ENCODE measurements at regions of chr1 and their contacts with region 1.

Region 1: DNA sequence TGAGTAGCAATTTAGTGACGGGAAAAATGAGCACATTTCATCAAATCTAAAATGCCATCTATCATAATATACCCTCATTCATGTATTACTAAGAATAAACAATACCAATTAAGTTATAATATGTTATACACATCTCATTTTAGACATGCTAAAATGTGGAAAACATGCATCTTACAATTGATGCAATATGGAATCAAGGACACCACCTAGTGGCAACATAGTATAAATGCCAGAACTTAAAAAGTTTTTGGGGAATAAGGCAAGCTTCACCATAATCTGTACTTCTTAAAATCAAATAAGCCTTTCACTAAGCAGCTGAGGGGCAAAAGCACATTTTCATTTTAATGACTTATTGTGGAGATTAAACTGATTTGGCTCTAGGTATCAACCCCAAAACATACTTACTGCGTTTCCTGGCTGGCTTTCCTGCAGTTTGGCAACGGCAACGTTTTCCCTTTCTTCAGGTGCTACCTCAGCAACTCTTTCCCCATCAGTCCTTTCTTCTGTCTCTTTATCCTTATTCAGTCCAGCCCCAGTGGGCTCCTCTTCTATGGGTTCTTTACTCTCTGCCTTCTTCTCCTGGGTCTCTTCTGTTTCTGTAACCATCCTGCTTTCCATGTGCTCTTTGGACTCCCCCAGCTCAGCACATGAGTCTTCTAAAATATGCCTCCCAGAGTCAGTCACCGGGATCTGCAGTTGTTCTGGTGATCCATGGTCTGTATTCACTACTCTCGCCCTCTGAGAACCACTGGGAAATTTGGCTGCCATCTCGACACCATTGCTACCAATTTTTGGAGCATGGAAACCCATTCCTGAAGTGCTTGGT is 11.4 kb downstream of the SDE2 start:
- DNase-seq: peak; percentile 45
- H3K4me3 ChIP-seq: no peak overlapping the region
- H3K27ac ChIP-seq: no peak overlapping the region
- H3K4me1 ChIP-seq: no peaks in the 10 kb centered on the region
- H3K27me3 ChIP-seq: no peaks in the 10 kb centered on the region
- CTCF ChIP-seq: peak; percentile 87
- EP300 ChIP-seq: no peak
- RAD21 ChIP-seq: peak; percentile 67

Region 2: GRCh38 chr1:225467193-225468020 is 520.3 kb before region 1 on chr1:
- CTCF ChIA-PET with region 1: interaction called, 11 read pairs
- POLR2A ChIA-PET with region 1: no interaction called
- DNase-seq: no peak
- H3K4me3 ChIP-seq: no peak overlapping the region
- H3K27ac ChIP-seq: no peak overlapping the region
- H3K4me1 ChIP-seq: peaks cover 0 to 12% of the 10 kb centered on the region in 2 experiments; a peak in 3 of 4 replicates
- H3K27me3 ChIP-seq: no peaks in the 10 kb centered on the region
- CTCF ChIP-seq: no peak
- EP300 ChIP-seq: no peak
- RAD21 ChIP-seq: no peak

Region 3: GRCh38 chr1:225480825-225481434 is 506.8 kb before region 1 on chr1:
- CTCF ChIA-PET with region 1: interaction called, 82 read pairs
- POLR2A ChIA-PET with region 1: no interaction called
- DNase-seq: peak; percentile 68
- H3K4me3 ChIP-seq: no peak overlapping the region
- H3K27ac ChIP-seq: no peak overlapping the region
- H3K4me1 ChIP-seq: peaks cover 0 to 6% of the 10 kb centered on the region in 2 experiments; a peak in 2 of 4 replicates
- H3K27me3 ChIP-seq: no peaks in the 10 kb centered on the region
- CTCF ChIP-seq: peak; percentile 75
- EP300 ChIP-seq: no peak
- RAD21 ChIP-seq: peak; percentile 65

Region 4: DNA sequence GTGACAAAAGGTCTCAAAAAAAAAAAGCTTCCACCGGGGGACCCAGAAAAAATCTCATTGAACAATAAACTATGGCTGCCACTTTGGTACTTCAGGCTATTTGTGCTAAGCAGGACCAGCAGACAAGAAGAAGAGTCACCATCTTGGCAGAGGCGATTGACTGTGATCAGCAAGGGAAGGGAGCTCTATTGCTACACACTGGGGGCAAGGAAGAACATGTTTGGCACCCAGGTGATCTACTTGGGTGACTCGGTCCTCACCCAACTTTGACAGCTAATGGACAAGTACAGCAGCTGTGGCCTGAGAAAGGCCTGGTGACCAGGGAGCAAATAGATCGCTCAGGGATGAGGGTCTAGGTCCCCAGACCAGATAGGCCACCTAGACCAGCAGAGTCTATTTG is 263.5 kb before region 1 on chr1:
- CTCF ChIA-PET with region 1: no interaction called
- POLR2A ChIA-PET with region 1: no interaction called
- DNase-seq: no peak
- H3K4me3 ChIP-seq: no peak overlapping the region
- H3K27ac ChIP-seq: no peak overlapping the region
- H3K4me1 ChIP-seq: no peaks in the 10 kb centered on the region
- H3K27me3 ChIP-seq: no peaks in the 10 kb centered on the region
- CTCF ChIP-seq: no peak
- EP300 ChIP-seq: no peak
- RAD21 ChIP-seq: no peak

Region 5: DNA sequence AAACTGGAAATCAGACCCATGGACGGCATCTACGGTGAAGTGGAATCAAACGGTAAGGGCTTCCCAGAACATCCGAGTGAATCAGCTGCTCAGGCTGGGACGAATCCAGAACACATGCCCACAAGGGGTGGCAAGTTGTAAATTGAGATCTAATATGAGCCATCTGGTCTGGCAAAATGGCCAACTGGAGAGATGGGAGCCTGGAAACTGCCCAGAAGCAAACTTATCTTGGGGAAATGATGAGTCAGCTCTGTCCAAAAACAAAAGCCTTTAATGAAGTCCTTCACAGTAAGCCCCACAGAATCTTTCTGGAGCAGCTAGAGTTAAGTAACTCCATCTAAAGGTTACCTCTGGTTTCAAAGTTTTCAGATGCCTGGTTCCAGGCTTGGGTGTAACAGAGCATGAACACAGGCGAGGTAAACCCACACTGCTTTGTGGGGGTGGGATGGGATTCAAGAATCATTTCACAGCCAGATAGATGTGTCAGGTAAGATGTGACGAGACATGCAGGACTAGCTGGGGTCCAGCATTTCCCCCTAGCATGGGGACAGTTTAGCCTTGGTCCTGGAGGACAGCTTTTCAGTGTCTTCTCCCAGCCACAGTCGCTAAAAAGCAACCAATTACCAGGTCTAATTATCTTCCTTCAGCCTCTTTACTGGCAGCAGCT is 220.6 kb before region 1 on chr1:
- CTCF ChIA-PET with region 1: interaction called, 22 read pairs
- POLR2A ChIA-PET with region 1: no interaction called
- DNase-seq: peak; percentile 72
- H3K4me3 ChIP-seq: no peak overlapping the region
- H3K27ac ChIP-seq: peak overlapping the region; percentile 81 to 90
- H3K4me1 ChIP-seq: peaks cover 43 to 64% of the 10 kb centered on the region in 2 experiments
- H3K27me3 ChIP-seq: no peaks in the 10 kb centered on the region
- CTCF ChIP-seq: no peak
- EP300 ChIP-seq: peak; percentile 71 to 93
- RAD21 ChIP-seq: no peak

Region 6: DNA sequence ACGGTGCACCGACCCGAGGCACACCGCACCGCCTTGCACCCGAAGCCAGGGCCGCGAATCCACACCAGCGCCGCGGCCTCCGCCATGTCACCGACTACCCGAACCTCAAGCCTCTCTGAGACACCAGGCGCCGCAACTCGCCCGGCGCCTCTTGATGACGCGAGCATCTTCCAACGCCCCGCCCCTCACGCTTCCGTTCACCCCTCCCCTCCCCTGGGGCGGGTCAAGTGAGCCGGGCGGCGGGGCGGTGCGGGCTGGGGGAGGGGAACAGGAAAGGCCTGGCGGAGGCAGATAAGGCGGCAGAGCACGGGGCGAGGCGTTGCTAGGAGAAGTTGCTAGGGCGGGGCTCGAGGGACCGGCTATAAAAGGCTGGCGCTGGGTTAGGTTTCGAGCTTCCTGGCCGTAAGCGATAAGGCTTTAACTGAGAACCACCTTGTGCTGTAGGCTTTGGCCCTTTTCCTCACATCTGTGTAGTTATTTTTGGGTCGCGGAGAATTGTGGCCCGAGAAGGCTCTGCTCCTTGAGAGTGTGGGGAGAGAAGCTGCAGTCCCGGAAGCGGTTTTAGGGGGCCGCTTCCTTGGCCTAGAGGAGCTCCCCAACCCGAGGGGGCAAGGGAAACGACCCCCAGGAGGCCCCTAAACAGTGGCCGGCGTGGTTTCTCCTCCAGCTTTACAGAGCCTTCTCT is 11.7 kb after region 1 on chr1 and contains the start of gene SDE2:
- CTCF ChIA-PET with region 1: interaction called, 27 read pairs
- POLR2A ChIA-PET with region 1: no interaction called
- DNase-seq: peak; percentile 98
- H3K4me3 ChIP-seq: peak within 1 kb of the TSS; percentile 84 to 97
- H3K27ac ChIP-seq: peak within 1 kb of the TSS; percentile 75 to 97
- H3K4me1 ChIP-seq: peaks cover 28 to 38% of the 10 kb centered on the region in 2 experiments
- H3K27me3 ChIP-seq: no peaks in the 10 kb centered on the region
- CTCF ChIP-seq: no peak
- EP300 ChIP-seq: peak in 1 of 2 experiments; percentile 57; a peak in 1 of 4 replicates
- RAD21 ChIP-seq: no peak; the same call in 1 of the 2 replicates
- polyA plus RNA-seq, gene SDE2: 10.1 and 15.1 TPM in 2 replicates

Region 7: DNA sequence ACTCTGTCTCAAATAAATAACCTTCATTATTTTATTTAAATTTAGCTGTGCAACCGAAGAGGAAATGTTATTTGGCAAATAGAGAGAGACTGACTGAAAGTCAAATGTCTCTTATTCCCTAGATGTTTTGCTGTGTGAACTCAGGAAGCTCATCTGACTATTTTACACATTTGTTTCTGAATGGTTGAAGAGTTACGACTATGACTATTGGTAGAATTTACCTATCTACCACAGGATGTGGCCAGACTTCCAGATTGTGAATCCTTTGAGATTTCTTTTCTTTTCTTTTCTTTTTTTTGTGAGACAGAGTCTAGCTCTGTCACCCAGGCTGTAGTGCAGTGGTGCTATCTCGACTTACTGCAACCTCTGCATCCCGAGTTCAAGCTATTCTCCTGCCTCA is 16.7 kb after region 1 on chr1:
- CTCF ChIA-PET with region 1: interaction called, 13 read pairs
- POLR2A ChIA-PET with region 1: no interaction called
- DNase-seq: no peak
- H3K4me3 ChIP-seq: no peak overlapping the region
- H3K27ac ChIP-seq: no peak overlapping the region
- H3K4me1 ChIP-seq: peaks cover 6 to 17% of the 10 kb centered on the region in 2 experiments
- H3K27me3 ChIP-seq: no peaks in the 10 kb centered on the region
- CTCF ChIP-seq: no peak
- EP300 ChIP-seq: no peak
- RAD21 ChIP-seq: no peak

Region 8: DNA sequence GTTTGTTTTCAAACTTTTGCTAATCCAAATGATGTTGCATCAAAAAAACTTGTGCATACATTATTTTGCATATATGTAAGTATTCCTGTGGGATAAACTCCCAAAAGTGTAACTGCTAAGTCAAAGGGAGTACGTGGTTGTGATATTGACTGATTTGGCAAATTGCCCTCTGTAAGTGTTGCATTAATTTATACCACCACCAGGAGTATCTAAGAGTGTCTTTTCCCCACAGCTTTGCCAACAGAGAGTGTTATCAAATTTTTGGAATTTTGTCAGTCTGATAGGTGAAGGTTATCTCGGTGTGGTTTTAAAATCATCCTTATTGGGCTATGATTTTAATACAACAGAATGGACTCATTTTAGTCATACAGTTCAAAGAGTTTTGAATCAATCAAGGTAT is 450.3 kb after region 1 on chr1:
- CTCF ChIA-PET with region 1: no interaction called
- POLR2A ChIA-PET with region 1: no interaction called
- DNase-seq: no peak
- H3K4me3 ChIP-seq: no peak overlapping the region
- H3K27ac ChIP-seq: no peak overlapping the region
- H3K4me1 ChIP-seq: no peaks in the 10 kb centered on the region; a peak in 1 of 4 replicates
- H3K27me3 ChIP-seq: no peaks in the 10 kb centered on the region; the same call in 1 of the 2 replicates
- CTCF ChIP-seq: peak; percentile 28; the same call in 1 of the 2 replicates
- EP300 ChIP-seq: no peak
- RAD21 ChIP-seq: no peak

Measured in SK-N-SH (cell line).